PC-9 (cell line): ENCODE measurements at regions of chr4 and their contacts with region 1.

Region 1: GRCh38 chr4:39205000-39205399 is 22.7 kb downstream of the WDR19 start:
- DNase-seq: no peak
- H3K4me3 ChIP-seq: no peak overlapping the region
- H3K27ac ChIP-seq: no peak overlapping the region
- H3K4me1 ChIP-seq: no peaks in the 10 kb centered on the region
- H3K27me3 ChIP-seq: no peaks in the 10 kb centered on the region
- CTCF ChIP-seq: no peak

Region 2: GRCh38 chr4:39067451-39067850 is 137.5 kb before region 1 on chr4:
- CTCF ChIA-PET with region 1: no interaction called
- POLR2A ChIA-PET with region 1: no interaction called
- intact Hi-C with region 1: no loop called
- DNase-seq: no peak
- H3K4me3 ChIP-seq: no peak overlapping the region
- H3K27ac ChIP-seq: no peak overlapping the region
- H3K4me1 ChIP-seq: no peaks in the 10 kb centered on the region
- H3K27me3 ChIP-seq: no peaks in the 10 kb centered on the region
- CTCF ChIP-seq: no peak

Region 3: DNA sequence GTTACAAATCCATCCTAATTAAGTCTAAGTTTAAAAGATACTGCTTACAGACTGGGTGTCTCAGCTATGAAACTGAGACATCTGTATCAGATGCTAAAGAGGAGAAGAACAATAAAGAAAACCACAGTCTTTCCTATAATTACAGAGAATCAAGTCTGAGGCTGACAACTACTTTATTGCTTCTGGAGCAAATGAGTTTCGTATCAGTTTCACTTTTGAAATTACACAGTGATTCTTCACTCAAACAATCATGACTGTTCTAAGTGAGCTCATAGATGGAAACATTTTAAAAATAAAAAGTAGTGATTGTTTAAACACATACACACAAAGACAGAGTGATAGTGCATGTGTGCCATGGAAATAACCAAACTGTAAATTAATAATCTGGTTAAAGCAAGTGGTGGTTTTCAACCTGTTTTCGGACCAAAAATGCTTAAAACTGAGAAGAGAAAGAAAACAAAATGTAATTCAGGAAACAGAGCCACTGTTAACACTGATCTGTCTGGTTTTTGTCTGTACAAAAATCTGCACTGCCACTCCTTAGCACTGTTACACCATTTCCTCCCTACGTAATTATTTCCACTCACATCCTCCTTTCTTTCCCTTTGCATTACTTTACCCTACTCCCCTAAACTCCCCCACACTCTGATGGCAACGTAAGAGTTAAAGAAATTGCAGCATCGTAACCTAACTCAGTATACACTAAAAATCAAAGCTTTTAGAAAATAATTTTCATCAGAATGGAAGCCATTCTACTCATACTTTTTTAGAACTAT is 148.7 kb after region 1 on chr4:
- CTCF ChIA-PET with region 1: interaction called, 13 read pairs
- POLR2A ChIA-PET with region 1: no interaction called
- intact Hi-C with region 1: no loop called
- DNase-seq: no peak
- H3K4me3 ChIP-seq: no peak overlapping the region
- H3K27ac ChIP-seq: peak overlapping the region; percentile 55
- H3K4me1 ChIP-seq: peaks cover 18% of the 10 kb centered on the region
- H3K27me3 ChIP-seq: no peaks in the 10 kb centered on the region
- CTCF ChIP-seq: no peak